Common myeloid progenitor, CD34-positive (primary cell): ENCODE measurements at regions of chr3 and their contacts with region 1.

Region 1: GRCh38 chr3:46860017-46860830 is 3.0 kb downstream of the MYL3 start:
- DNase-seq: peak in 2 of 3 donors; percentile 44 to 46
- H3K4me3 ChIP-seq: no peak overlapping the region
- H3K27ac ChIP-seq: no peak overlapping the region
- H3K4me1 ChIP-seq: no peaks in the 10 kb centered on the region
- H3K27me3 ChIP-seq: peaks cover 0 to 1% (median 0%) of the 10 kb centered on the region in 5 experiments

Region 2: GRCh38 chr3:46845791-46846623 is 14.2 kb before region 1 on chr3:
- CTCF ChIA-PET with region 1: interaction called, 18 read pairs
- POLR2A ChIA-PET with region 1: no interaction called
- DNase-seq: peak; percentile 87 to 94 (median 92)
- H3K4me3 ChIP-seq: peak overlapping the region; percentile 33 to 86 (median 69)
- H3K27ac ChIP-seq: no peak overlapping the region
- H3K4me1 ChIP-seq: peaks cover 0 to 18% (median 16%) of the 10 kb centered on the region in 4 experiments
- H3K27me3 ChIP-seq: peaks cover 0 to 2% (median 0%) of the 10 kb centered on the region in 5 experiments